ENCODE measurements at regions of chr6 and their contacts with region 1.

Region 1: GRCh38 chr6:85923013-85923430 is 280.3 kb upstream of the SYNCRIP start:
- DNase-seq: peak in 28 of 42 donors; percentile 6 to 74 (median 42)

Region 2: DNA sequence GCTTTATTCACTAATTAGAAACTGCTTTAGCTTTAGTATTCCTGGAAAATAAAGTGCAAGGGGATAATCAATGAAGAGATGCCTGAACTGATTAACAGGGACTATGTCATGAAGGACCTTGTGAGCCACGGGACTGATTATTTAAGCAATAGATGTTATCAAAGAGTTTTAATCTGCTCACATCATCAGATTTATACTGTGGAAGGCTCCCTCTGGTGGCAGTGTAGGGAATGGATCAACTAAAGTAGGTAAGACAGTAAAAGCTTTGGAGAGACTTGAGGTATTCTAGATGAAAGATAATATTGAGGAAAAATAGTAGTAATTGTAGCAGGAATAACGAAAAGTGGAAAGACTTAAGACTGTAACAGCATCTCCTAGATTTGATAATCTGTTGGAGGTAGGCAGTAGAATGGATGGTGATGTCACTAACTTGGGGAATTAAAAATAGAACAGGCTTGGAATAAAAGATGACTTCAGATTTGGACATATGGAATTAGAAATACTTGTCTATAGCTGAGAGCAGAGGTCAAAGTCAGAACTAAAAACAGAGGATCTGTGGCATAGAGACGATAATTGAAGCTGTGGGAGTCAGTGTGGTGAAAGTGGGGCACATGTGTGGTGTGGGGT is 934.0 kb after region 1 on chr6:
- intact Hi-C with region 1: loop called (anchors 10 kb)
- DNase-seq: peak in 36 of 42 donors; percentile 5 to 86 (median 59)

Region 3: GRCh38 chr6:86937219-86938079 is 1014.4 kb after region 1 on chr6 and contains the start of gene HTR1E:
- intact Hi-C with region 1: loop called (anchors 5 kb)
- DNase-seq: peak; percentile 41 to 89 (median 71)

Measured in head of caudate nucleus (tissue), 42 donors.